Vagina (tissue), 2 donors: ENCODE measurements at regions of chr6 and their contacts with region 1.

Region 1: DNA sequence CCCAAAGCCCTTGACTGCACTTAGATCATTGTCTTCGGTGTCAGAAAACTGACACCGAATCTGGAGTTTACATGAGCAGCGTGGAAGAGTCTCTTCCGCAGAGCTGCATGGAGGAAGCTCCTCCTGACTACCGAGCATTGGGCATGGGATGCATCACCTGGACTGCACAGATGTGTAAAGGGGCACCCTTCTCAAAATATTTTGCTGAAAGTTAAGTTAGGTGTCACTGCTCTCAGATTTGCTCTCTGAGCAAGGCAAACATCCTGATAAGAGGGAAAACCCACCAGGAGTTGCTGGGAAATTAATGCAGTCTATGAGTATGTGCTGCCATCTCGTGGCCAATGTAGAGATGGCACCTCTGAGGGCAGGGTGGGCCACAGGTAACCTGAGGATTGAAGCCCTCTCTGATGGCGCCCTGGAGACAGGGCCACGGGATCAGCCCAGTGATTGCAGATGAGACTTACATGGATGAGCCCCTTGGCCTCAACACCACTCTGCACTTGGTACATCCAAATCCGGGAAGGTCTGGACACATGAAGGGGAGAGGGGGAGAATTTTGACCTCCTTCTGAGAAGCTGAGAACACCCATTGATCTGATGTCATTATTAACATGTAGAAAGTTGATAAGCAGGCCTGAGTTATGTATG is 129.9 kb downstream of the LPA start:
- DNase-seq: no peak
- H3K4me3 ChIP-seq: peak overlapping the region in 1 of 2 donors; percentile 18
- H3K27ac ChIP-seq: no peak overlapping the region
- H3K4me1 ChIP-seq: no peaks in the 10 kb centered on the region
- H3K27me3 ChIP-seq: no peaks in the 10 kb centered on the region
- CTCF ChIP-seq: peak; percentile 70 to 95 (median 93)
- POLR2A ChIP-seq: no peak

Region 2: GRCh38 chr6:159842035-159842434 is 692.1 kb before region 1 on chr6:
- intact Hi-C with region 1: loop called (anchors 5 kb)
- DNase-seq: peak in 1 of 2 donors; percentile 25
- H3K4me3 ChIP-seq: no peak overlapping the region
- H3K27ac ChIP-seq: no peak overlapping the region
- H3K4me1 ChIP-seq: no peaks in the 10 kb centered on the region
- H3K27me3 ChIP-seq: no peaks in the 10 kb centered on the region
- CTCF ChIP-seq: no peak
- POLR2A ChIP-seq: no peak

Region 3: DNA sequence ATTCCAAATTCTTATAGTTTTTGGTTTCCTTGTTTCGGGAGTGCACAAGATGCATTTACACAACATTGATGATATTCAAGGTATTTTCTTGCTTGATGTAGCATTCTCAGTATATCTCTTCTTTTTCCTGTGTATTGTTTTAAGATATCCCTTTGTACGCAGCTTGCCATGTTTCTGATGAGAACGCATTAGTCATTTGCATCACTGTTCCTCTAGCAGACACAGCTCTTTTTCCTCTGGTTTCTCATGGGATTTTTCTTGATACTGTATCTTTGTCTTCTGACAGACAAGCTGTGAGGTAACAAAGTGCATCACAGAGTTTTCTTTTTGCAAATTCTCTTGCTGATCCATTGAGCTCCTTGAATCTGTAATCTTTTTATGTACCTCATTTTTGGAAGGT is 39.6 kb before region 1 on chr6:
- intact Hi-C with region 1: no loop called
- DNase-seq: no peak
- H3K4me3 ChIP-seq: no peak overlapping the region
- H3K27ac ChIP-seq: no peak overlapping the region
- H3K4me1 ChIP-seq: no peaks in the 10 kb centered on the region
- H3K27me3 ChIP-seq: no peaks in the 10 kb centered on the region
- CTCF ChIP-seq: no peak
- POLR2A ChIP-seq: no peak